Endothelial cell of umbilical vein (primary cell): ENCODE measurements at regions of chr17 and their contacts with region 1.

Region 1: GRCh38 chr17:6191405-6192324 is 121.5 kb downstream of the WSCD1 start:
- DNase-seq: peak; percentile 94
- H3K4me3 ChIP-seq: no peak overlapping the region
- H3K27ac ChIP-seq: peak overlapping the region; percentile 92
- H3K4me1 ChIP-seq: peaks cover 24% of the 10 kb centered on the region
- H3K27me3 ChIP-seq: no peaks in the 10 kb centered on the region
- CTCF ChIP-seq: no peak
- POLR2A ChIP-seq: peak; percentile 37

Region 2: DNA sequence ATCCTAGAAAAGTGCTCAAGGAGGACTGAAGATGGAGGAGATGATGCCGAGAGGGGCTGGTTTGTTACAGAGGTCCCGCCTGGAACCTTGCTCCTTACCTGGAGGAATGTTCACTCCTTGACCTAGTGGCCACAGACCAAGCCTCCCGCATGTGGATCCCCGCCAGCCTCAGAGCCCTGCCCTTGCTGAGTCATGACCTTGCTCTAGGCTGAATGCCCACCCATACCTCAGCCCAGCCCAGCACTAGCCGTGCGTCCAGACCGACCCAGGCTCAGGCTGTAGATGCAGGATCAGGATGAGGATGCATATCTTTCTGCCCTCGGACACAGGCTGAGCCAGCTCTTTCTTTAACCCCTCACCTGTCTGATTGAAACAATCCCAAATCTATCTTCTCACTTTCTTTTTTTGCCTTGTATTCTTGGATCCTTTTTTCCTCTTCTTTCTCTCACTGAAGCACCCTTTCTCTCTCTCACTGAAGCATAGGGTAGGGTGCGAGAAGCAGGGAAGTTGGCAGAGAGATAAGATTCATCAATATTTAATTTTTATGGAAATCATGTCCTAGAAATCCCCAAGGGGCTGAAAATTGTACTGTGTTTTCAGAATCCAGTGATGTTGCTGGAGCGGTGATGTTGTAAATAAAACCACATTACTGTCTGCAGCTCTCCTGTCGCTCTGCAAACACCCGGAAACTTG is 86.6 kb before region 1 on chr17:
- CTCF ChIA-PET with region 1: no interaction called
- POLR2A ChIA-PET with region 1: no interaction called
- dilution Hi-C with region 1: no loop called
- intact Hi-C with region 1: loop called (anchors 1 kb)
- DNase-seq: no peak
- H3K4me3 ChIP-seq: no peak overlapping the region
- H3K27ac ChIP-seq: no peak overlapping the region
- H3K4me1 ChIP-seq: peaks cover 22% of the 10 kb centered on the region
- H3K27me3 ChIP-seq: no peaks in the 10 kb centered on the region
- CTCF ChIP-seq: no peak
- POLR2A ChIP-seq: no peak

Region 3: GRCh38 chr17:6218333-6218732 is 26.7 kb after region 1 on chr17:
- CTCF ChIA-PET with region 1: interaction called, 3 read pairs
- POLR2A ChIA-PET with region 1: no interaction called
- dilution Hi-C with region 1: no loop called
- intact Hi-C with region 1: loop called (anchors 2 kb)
- DNase-seq: no peak
- H3K4me3 ChIP-seq: no peak overlapping the region
- H3K27ac ChIP-seq: no peak overlapping the region
- H3K4me1 ChIP-seq: peaks cover 5% of the 10 kb centered on the region
- H3K27me3 ChIP-seq: no peaks in the 10 kb centered on the region
- CTCF ChIP-seq: no peak
- POLR2A ChIP-seq: no peak

Region 4: GRCh38 chr17:6231886-6232731 is 40.4 kb after region 1 on chr17:
- CTCF ChIA-PET with region 1: interaction called, 3 read pairs
- POLR2A ChIA-PET with region 1: no interaction called
- dilution Hi-C with region 1: no loop called
- intact Hi-C with region 1: loop called (anchors 2 kb)
- DNase-seq: peak; percentile 53
- H3K4me3 ChIP-seq: no peak overlapping the region
- H3K27ac ChIP-seq: peak overlapping the region; percentile 72
- H3K4me1 ChIP-seq: peaks cover 15% of the 10 kb centered on the region
- H3K27me3 ChIP-seq: no peaks in the 10 kb centered on the region
- CTCF ChIP-seq: no peak
- POLR2A ChIP-seq: no peak

Region 5: DNA sequence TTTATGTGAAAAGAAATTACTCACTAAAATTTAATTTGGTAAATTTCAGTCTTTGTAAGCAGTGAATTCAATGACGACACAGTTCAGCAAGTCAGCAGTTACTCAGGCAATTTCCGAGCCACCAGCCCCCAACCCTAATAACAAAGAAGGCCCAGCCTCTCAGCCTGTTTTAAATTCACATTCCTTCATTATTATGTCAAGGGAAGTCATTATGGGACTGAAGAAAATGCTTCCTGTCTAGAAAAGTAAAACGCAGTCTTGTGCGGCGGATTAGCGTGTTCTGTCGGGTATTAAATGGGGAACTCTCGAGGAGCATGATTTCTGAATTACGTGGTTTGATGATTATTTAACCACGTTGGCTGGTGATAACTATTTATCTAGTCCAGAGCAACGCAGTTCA is 65.7 kb after region 1 on chr17:
- CTCF ChIA-PET with region 1: no interaction called
- POLR2A ChIA-PET with region 1: no interaction called
- dilution Hi-C with region 1: no loop called
- intact Hi-C with region 1: loop called (anchors 1 kb)
- DNase-seq: peak; percentile 88
- H3K4me3 ChIP-seq: no peak overlapping the region
- H3K27ac ChIP-seq: peak overlapping the region; percentile 100
- H3K4me1 ChIP-seq: peaks cover 33% of the 10 kb centered on the region
- H3K27me3 ChIP-seq: no peaks in the 10 kb centered on the region
- CTCF ChIP-seq: no peak
- POLR2A ChIP-seq: no peak

Region 6: DNA sequence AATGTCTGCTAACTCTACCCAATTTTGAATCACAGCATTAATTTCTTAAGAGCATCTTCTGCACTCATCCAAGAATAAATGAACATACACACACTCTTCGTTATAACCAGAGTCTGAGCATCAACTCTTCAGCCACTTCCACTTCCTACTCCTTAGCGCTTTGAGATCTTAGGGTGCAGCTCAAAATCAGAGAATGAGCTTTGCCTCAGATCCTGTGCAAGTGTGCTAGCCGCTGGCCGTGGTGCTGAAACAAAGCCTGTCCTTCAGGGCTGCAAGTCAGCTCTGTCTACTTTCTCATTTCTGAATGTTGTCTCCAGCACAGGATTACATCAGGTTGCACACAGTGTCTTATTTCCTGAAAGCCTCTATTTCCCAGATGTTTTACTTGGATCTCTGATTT is 77.8 kb after region 1 on chr17:
- CTCF ChIA-PET with region 1: no interaction called
- POLR2A ChIA-PET with region 1: no interaction called
- dilution Hi-C with region 1: no loop called
- intact Hi-C with region 1: no loop called
- DNase-seq: peak; percentile 60
- H3K4me3 ChIP-seq: no peak overlapping the region
- H3K27ac ChIP-seq: no peak overlapping the region
- H3K4me1 ChIP-seq: no peaks in the 10 kb centered on the region
- H3K27me3 ChIP-seq: peaks cover 0 to 6% of the 10 kb centered on the region in 2 experiments
- CTCF ChIP-seq: no peak
- POLR2A ChIP-seq: no peak

Region 7: GRCh38 chr17:6591599-6592158 is 400.0 kb after region 1 on chr17:
- CTCF ChIA-PET with region 1: no interaction called
- POLR2A ChIA-PET with region 1: no interaction called
- dilution Hi-C with region 1: no loop called
- intact Hi-C with region 1: no loop called
- DNase-seq: no peak
- H3K4me3 ChIP-seq: no peak overlapping the region
- H3K27ac ChIP-seq: no peak overlapping the region
- H3K4me1 ChIP-seq: no peaks in the 10 kb centered on the region
- H3K27me3 ChIP-seq: no peaks in the 10 kb centered on the region
- CTCF ChIP-seq: no peak
- POLR2A ChIP-seq: no peak